Spleen (tissue), 13 donors: ENCODE measurements at regions of chr10 and their contacts with region 1.

Region 1: GRCh38 chr10:15209827-15210509 is 41.5 kb upstream of the NMT2 start:
- DNase-seq: peak; percentile 90
- H3K4me3 ChIP-seq: peak overlapping the region in 1 of 8 donors; percentile 37
- H3K27ac ChIP-seq: peak overlapping the region in 1 of 8 donors; percentile 13
- H3K4me1 ChIP-seq: peaks cover 11 to 37% (median 26%) of the 10 kb centered on the region in 6 donors
- H3K27me3 ChIP-seq: no peaks in the 10 kb centered on the region
- CTCF ChIP-seq: peak; percentile 45 to 86 (median 79)
- POLR2A ChIP-seq: no peak

Region 2: GRCh38 chr10:15169555-15170401 is 40.2 kb before region 1 on chr10:
- intact Hi-C with region 1: loop called (anchors 5 kb)
- DNase-seq: no peak
- H3K4me3 ChIP-seq: peak overlapping the region in 7 of 8 donors; percentile 1 to 64 (median 24)
- H3K27ac ChIP-seq: peak overlapping the region; percentile 56 to 91 (median 74)
- H3K4me1 ChIP-seq: peaks cover 27 to 55% (median 46%) of the 10 kb centered on the region in 6 donors
- H3K27me3 ChIP-seq: peaks cover 0 to 9% (median 0%) of the 10 kb centered on the region in 7 donors
- CTCF ChIP-seq: no peak
- POLR2A ChIP-seq: no peak

Region 3: DNA sequence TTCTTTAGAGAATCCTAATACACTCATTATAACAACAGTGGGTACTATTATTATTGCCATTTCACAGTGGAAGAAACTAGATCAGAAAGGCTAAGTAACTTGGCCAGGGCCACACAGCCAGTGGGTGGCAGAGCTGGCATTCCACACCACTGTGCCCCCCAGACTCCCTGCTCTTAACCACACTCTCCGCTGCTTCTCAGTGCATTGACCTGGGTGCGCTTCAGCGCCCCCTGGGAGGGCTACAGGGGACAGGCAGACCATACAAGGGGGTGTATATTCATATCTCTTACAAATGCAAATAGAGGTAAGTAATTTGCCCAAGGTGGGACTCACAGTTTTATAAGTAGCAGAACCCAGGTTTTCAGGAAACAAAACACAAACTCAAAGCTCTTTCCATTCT is 35.6 kb after region 1 on chr10:
- intact Hi-C with region 1: no loop called
- DNase-seq: no peak
- H3K4me3 ChIP-seq: no peak overlapping the region
- H3K27ac ChIP-seq: no peak overlapping the region
- H3K4me1 ChIP-seq: no peaks in the 10 kb centered on the region
- H3K27me3 ChIP-seq: no peaks in the 10 kb centered on the region
- CTCF ChIP-seq: peak in 3 of 11 experiments; percentile 27 to 30 (median 28)
- POLR2A ChIP-seq: no peak